Heart right ventricle (tissue), 16 donors: ENCODE measurements at regions of chr16 and their contacts with region 1.

Region 1: DNA sequence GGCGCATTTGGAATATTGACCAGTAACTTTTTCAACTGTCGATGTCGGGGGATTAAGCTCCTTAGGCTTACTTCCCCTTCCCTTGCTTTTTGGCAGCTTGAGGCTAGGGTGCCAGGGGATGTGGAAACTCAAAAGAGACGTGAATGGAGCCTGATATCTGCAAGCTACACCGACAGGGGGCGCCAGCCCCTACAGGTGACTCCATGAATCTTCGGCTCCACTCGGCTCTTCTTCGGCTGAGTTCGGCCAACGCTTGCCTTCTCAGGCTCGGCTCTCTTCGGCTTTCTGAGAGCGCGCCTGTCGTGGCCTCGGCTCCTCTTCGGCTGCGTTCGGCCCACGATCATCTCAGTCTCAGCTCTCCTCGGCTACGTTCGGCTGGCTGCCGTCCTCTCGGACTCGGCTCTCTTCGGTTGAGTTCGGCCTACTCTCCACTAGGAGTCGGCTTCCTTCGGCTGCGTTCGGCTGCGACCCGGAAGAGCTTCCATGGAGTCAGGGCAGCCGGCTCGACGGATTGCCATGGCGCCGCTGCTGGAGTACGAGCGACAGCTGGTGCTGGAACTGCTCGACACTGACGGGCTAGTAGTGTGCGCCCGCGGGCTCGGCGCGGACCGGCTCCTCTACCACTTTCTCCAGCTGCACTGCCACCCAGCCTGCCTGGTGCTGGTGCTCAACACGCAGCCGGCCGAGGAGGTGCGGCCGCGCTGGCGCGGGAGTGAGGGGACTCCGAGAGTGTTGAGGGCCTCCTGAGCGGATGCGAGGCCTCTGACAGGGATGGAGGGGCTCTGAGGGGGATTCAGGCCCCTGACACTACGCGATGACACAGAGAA is at the start of gene ERCC4:
- DNase-seq: peak; percentile 100
- ATAC-seq: peak; percentile 98 to 99 (median 98)
- H3K4me3 ChIP-seq: peak within 1 kb of the TSS; percentile 51 to 94 (median 80)
- H3K27ac ChIP-seq: peak within 1 kb of the TSS in 9 of 10 donors; percentile 59 to 90 (median 84)
- H3K4me1 ChIP-seq: peaks cover 7 to 38% (median 33%) of the 10 kb centered on the region in 9 donors
- H3K27me3 ChIP-seq: no peaks in the 10 kb centered on the region
- CTCF ChIP-seq: peak; percentile 71 to 93 (median 89)
- total RNA-seq, gene ERCC4: 5.1 to 13.1 (median 10.2) TPM

Region 2: DNA sequence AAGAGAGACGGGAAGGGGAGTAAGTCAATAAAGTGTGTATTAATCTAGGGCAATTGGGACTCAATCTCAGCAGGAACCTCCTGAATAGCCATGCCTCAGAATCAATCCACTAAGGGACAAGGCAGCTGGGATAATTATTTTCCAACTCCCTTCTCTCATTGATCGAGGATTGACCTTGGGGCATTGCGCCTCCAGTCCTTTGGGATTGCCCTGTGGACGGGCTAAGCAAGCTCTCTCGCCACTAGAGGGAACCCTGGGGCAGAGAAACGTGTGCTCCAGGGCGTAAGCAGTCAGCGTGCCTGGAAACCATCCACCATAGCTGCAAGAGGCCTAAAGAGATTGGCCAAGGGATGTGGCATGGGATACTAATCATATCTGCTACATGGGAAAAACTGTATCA is 53.8 kb before region 1 on chr16:
- intact Hi-C with region 1: loop called in 3 of 10 experiments (anchors 2 to 5 kb)
- DNase-seq: peak; percentile 58 to 71
- ATAC-seq: peak; percentile 75 to 97 (median 90)
- H3K4me3 ChIP-seq: no peak overlapping the region
- H3K27ac ChIP-seq: no peak overlapping the region
- H3K4me1 ChIP-seq: no peaks in the 10 kb centered on the region
- H3K27me3 ChIP-seq: peaks cover 0 to 3% (median 0%) of the 10 kb centered on the region in 7 donors
- CTCF ChIP-seq: peak; percentile 11 to 82 (median 72)

Region 3: GRCh38 chr16:13957197-13958078 is 37.5 kb after region 1 on chr16:
- intact Hi-C with region 1: no loop called
- DNase-seq: peak; percentile 51 to 54
- ATAC-seq: peak; percentile 88 to 98 (median 92)
- H3K4me3 ChIP-seq: peak overlapping the region in 7 of 10 donors; percentile 4 to 37 (median 32)
- H3K27ac ChIP-seq: peak overlapping the region; percentile 44 to 89 (median 69)
- H3K4me1 ChIP-seq: peaks cover 0 to 42% (median 15%) of the 10 kb centered on the region in 9 donors
- H3K27me3 ChIP-seq: no peaks in the 10 kb centered on the region
- CTCF ChIP-seq: no peak

Region 4: DNA sequence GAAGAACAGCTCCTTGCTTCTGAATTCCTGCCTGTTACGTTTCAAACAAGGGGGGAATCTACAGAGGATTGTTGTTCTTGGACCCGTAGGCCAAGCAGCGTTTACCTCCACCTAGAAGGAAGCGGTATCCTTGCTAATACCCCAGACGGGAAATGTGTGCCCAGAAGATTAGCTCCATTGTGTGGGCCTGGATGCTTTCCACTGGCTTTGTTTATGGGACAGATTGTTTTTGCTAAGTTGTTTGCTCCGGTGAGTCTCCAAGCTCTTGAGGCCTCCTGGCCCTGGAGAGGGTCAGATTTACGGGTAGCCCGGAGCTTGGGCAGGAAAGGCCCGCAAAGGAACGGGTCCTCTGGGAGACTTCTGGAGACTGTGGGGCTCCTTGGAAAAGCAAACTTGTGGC is 122.8 kb after region 1 on chr16:
- intact Hi-C with region 1: no loop called
- DNase-seq: peak; percentile 17 to 47
- ATAC-seq: peak; percentile 64 to 92 (median 86)
- H3K4me3 ChIP-seq: no peak overlapping the region
- H3K27ac ChIP-seq: peak overlapping the region in 9 of 10 donors; percentile 25 to 81 (median 56)
- H3K4me1 ChIP-seq: peaks cover 0 to 30% (median 9%) of the 10 kb centered on the region in 9 donors
- H3K27me3 ChIP-seq: no peaks in the 10 kb centered on the region
- CTCF ChIP-seq: no peak

Region 5: DNA sequence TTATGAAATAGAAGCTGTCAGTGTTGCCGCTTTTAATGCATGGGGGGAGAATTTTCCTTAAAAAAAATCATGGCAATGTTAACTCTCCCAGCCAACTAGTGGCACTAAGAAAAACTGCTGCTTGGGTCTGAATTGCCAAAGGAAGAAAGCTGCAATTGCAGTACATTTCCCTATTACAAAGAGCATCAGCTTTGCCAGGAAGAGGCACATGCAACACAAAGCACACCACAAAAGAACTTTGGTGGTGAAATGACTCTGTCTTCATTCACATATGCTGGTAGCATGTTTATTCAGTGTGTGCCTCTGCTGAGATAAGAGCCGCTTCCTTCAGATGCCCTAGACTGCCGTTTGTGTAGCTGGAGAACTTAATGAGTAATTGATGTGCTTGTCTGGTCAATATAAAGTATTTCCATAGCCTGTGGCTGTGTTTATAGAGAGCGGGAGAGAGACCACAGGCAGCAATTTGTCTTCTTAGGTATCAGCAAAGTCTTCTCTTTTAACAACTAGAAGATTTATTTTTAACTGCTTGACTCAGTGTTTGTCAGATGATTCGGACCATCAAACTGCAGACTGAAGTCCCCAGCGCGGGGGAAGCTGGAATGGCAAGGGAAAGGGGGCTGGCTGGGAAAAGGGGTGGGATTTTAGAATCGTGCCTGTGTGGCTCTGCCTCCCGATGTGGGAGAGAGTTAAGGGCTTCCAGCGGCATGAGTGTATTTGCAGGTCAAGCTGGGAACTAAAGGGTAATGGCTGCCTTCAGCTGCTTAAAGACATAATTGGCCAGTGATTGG is 266.3 kb after region 1 on chr16:
- intact Hi-C with region 1: loop called in 6 of 10 experiments (anchors 5 to 10 kb)
- DNase-seq: peak; percentile 27 to 56
- ATAC-seq: peak; percentile 55 to 81 (median 72)
- H3K4me3 ChIP-seq: peak overlapping the region; percentile 13 to 63 (median 50)
- H3K27ac ChIP-seq: peak overlapping the region; percentile 32 to 86 (median 78)
- H3K4me1 ChIP-seq: peaks cover 4 to 77% (median 46%) of the 10 kb centered on the region in 9 donors
- H3K27me3 ChIP-seq: no peaks in the 10 kb centered on the region
- CTCF ChIP-seq: peak in 7 of 9 donors; percentile 29 to 63 (median 56)

Region 6: GRCh38 chr16:14219983-14220382 is 300.1 kb after region 1 on chr16:
- intact Hi-C with region 1: loop called in 1 of 10 experiments (anchors 10 kb)
- DNase-seq: no peak
- ATAC-seq: no peak
- H3K4me3 ChIP-seq: no peak overlapping the region
- H3K27ac ChIP-seq: no peak overlapping the region
- H3K4me1 ChIP-seq: no peaks in the 10 kb centered on the region
- H3K27me3 ChIP-seq: no peaks in the 10 kb centered on the region
- CTCF ChIP-seq: no peak

Region 7: GRCh38 chr16:14285513-14286385 is 365.9 kb after region 1 on chr16:
- intact Hi-C with region 1: loop called in 7 of 10 experiments (anchors 2 to 10 kb)
- DNase-seq: peak; percentile 92 to 94
- ATAC-seq: peak; percentile 94 to 96 (median 95)
- H3K4me3 ChIP-seq: peak overlapping the region; percentile 67 to 95 (median 86)
- H3K27ac ChIP-seq: peak overlapping the region; percentile 17 to 89 (median 82)
- H3K4me1 ChIP-seq: peaks cover 0 to 21% (median 15%) of the 10 kb centered on the region in 9 donors
- H3K27me3 ChIP-seq: no peaks in the 10 kb centered on the region
- CTCF ChIP-seq: peak in 1 of 9 donors; percentile 1